ENCODE measurements at regions of chr1 and their contacts with region 1.

Region 1: GRCh38 chr1:17574516-17574915 is 35.0 kb downstream of the ARHGEF10L start:
- DNase-seq: peak; percentile 55
- ATAC-seq: peak; percentile 55
- H3K4me3 Mint-ChIP-seq: no peak overlapping the region
- H3K27ac Mint-ChIP-seq: peak overlapping the region; percentile 91
- H3K4me1 Mint-ChIP-seq: peaks cover 82% of the 10 kb centered on the region
- H3K27me3 Mint-ChIP-seq: no peaks in the 10 kb centered on the region
- CTCF ChIP-seq: peak; percentile 21; the same call in 1 of the 2 replicates

Region 2: GRCh38 chr1:17330856-17331255 is 243.7 kb before region 1 on chr1:
- CTCF ChIA-PET with region 1: no interaction called
- POLR2A ChIA-PET with region 1: no interaction called
- DNase-seq: no peak
- ATAC-seq: no peak
- H3K4me3 Mint-ChIP-seq: no peak overlapping the region
- H3K27ac Mint-ChIP-seq: no peak overlapping the region
- H3K4me1 Mint-ChIP-seq: no peaks in the 10 kb centered on the region
- H3K27me3 Mint-ChIP-seq: no peaks in the 10 kb centered on the region; the same call in 1 of the 2 replicates
- CTCF ChIP-seq: no peak

Region 3: GRCh38 chr1:17502326-17502778 is 72.2 kb before region 1 on chr1:
- CTCF ChIA-PET with region 1: interaction called, 114 read pairs
- POLR2A ChIA-PET with region 1: interaction called, 4 read pairs
- DNase-seq: peak; percentile 97
- ATAC-seq: peak; percentile 99
- H3K4me3 Mint-ChIP-seq: no peak overlapping the region
- H3K27ac Mint-ChIP-seq: no peak overlapping the region
- H3K4me1 Mint-ChIP-seq: peaks cover 7% of the 10 kb centered on the region; the same call in 1 of the 2 replicates
- H3K27me3 Mint-ChIP-seq: 0 out of 2 replicates have a peak, but pooled peaks cover 4% of the 10 kb centered on the region
- CTCF ChIP-seq: peak; percentile 97

Region 4: DNA sequence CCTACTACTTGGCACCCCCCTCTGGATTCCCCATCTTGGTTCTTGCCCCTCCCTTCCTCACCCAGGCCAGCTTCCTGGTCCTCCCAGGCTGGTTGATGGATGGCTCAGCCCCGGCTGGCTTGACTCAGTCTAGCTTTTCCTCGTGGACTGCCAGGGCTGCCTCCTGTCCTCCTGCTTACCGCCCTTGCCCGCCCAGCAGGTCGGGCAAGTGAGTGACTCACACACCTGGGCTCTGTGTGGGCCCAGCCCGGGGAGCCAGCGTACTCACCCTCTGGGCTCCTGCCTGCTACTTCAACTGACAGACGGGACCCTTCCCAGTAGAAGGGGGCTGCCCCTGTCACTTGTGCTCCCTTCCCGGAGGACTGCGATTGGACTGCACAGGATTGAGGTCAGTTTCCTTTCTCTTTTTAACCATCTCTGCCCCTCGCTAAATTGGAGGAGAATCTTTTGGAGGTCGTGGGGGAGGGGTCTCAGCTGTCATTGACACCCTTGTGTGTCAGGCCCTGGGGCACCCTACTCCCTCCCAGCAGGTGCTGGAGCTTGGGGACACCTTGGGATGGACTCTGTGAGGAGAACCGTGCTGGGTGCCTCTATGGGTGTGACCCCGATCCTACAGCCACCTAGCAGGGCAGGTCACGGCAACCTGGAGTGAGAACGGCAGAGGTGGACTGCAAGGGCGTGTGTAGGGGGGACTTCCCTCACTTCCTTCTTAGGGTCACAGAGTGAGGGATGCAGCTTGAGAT is 54.3 kb before region 1 on chr1:
- CTCF ChIA-PET with region 1: interaction called, 47 read pairs
- POLR2A ChIA-PET with region 1: interaction called, 3 read pairs
- DNase-seq: no peak
- ATAC-seq: no peak; the same call in 1 of the 2 replicates
- H3K4me3 Mint-ChIP-seq: no peak overlapping the region
- H3K27ac Mint-ChIP-seq: peak overlapping the region; percentile 19; the same call in 1 of the 2 replicates
- H3K4me1 Mint-ChIP-seq: peaks cover 51% of the 10 kb centered on the region
- H3K27me3 Mint-ChIP-seq: no peaks in the 10 kb centered on the region
- CTCF ChIP-seq: no peak

Region 5: DNA sequence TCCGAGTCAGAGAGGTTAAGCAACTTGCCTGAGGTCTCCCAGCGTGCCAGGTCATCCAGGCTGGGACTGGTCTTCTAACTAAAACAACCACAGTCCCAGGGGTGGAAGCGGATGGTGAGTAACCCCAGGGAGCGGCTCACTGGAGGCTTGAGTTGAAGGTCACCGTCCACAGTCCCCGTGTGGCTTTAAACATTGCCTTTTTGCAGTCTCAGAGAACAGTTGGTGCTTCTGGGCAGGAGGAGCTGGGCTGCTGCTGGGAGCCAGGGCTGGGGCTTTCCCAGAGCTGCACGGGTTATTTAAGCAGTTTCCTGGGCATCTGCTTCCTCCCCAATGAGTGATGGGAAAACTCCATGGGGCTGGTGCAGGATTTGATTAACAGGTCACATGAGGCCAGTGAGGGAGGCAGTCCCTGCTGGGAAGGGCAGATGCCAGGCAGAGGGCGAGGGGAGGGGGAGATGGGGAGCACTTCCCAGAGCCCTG is 22.7 kb before region 1 on chr1:
- CTCF ChIA-PET with region 1: interaction called, 99 read pairs
- POLR2A ChIA-PET with region 1: interaction called, 14 read pairs
- DNase-seq: no peak
- ATAC-seq: peak; percentile 4
- H3K4me3 Mint-ChIP-seq: peak overlapping the region; percentile 16; the same call in 1 of the 2 replicates
- H3K27ac Mint-ChIP-seq: peak overlapping the region; percentile 94
- H3K4me1 Mint-ChIP-seq: peaks cover 90% of the 10 kb centered on the region
- H3K27me3 Mint-ChIP-seq: no peaks in the 10 kb centered on the region
- CTCF ChIP-seq: no peak

Region 6: DNA sequence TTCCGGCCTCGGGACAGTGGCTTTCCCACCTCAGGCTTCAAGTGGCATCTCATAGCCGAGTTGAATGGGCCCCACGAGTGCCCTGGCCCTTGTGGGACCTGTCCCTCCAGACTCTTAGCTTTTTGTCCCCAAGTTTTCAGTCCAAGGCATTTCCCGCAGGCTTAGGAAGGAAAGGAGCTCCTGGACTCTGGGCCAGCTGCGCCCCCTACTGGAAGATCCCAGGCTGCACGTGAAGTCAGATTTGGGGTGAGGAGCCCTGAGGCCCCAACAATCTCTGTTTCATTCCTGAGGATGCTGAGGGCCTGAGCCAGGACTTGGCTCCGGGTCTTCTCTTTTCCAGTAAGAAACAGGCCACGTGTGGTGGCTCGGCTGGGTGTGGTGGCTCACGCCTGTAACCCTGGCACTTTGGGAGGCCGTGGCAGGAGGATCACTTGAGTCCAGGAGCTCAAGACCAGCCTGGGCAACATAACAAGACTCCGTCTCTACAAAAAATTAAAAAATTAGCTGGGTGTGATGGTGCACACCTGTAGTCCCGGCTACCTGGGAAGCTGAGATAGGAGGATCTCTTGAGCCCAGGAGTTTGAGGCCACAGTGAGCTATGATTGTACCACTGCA is 32.4 kb after region 1 on chr1:
- CTCF ChIA-PET with region 1: interaction called, 253 read pairs
- POLR2A ChIA-PET with region 1: interaction called, 4 read pairs
- DNase-seq: peak; percentile 88
- ATAC-seq: peak; percentile 65
- H3K4me3 Mint-ChIP-seq: no peak overlapping the region
- H3K27ac Mint-ChIP-seq: no peak overlapping the region; the same call in none of the 2 replicates
- H3K4me1 Mint-ChIP-seq: peaks cover 22% of the 10 kb centered on the region
- H3K27me3 Mint-ChIP-seq: no peaks in the 10 kb centered on the region
- CTCF ChIP-seq: peak; percentile 91

Region 7: DNA sequence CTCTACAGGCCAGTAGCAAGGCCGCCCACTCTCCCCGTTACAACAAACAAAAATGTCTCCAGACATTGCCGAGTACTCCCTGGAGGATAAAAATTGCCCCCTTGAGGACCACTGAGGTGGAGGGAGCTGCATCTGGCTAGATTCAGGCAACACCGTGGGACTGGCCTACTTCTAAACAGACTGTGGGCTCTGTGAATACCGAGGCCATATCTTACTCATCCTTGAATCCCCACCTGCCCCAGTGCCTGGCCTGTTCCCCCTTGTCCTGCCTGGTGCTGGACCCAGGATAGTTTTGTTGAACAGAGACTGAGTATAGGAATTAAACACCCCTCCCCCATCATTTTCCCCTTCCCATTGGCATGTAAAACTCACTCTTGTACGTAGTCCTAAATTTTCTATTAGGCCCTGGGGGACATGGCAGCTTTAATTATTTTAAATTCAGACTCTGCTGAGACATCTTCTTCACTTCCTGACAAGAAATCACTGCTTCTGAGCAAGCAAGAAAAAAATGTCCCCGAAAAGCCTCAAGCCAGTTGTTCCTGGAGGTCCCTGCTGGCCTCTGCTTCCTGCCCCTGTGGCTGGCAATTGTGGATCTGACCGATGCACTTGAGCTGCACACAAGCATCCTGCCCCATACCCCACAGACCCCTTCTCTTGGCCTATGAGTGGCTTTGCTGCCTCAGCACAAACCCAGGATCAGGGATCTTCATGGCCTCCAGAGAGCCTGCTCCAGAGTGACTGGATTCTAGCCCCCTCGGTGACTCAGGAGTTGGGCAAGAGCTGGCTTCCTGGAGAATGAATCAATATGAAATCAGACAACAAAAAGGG is 291.6 kb after region 1 on chr1:
- CTCF ChIA-PET with region 1: no interaction called
- POLR2A ChIA-PET with region 1: no interaction called
- DNase-seq: no peak
- ATAC-seq: no peak
- H3K4me3 Mint-ChIP-seq: no peak overlapping the region
- H3K27ac Mint-ChIP-seq: no peak overlapping the region
- H3K4me1 Mint-ChIP-seq: peaks cover 17% of the 10 kb centered on the region
- H3K27me3 Mint-ChIP-seq: peaks cover 5% of the 10 kb centered on the region
- CTCF ChIP-seq: no peak